ENCODE measurements at regions of chr16 and their contacts with region 1.

Region 1: GRCh38 chr16:70653809-70654771 is 7.7 kb downstream of the IL34 start:
- DNase-seq: peak in 8 of 10 donors; percentile 57 to 95 (median 88)

Region 2: DNA sequence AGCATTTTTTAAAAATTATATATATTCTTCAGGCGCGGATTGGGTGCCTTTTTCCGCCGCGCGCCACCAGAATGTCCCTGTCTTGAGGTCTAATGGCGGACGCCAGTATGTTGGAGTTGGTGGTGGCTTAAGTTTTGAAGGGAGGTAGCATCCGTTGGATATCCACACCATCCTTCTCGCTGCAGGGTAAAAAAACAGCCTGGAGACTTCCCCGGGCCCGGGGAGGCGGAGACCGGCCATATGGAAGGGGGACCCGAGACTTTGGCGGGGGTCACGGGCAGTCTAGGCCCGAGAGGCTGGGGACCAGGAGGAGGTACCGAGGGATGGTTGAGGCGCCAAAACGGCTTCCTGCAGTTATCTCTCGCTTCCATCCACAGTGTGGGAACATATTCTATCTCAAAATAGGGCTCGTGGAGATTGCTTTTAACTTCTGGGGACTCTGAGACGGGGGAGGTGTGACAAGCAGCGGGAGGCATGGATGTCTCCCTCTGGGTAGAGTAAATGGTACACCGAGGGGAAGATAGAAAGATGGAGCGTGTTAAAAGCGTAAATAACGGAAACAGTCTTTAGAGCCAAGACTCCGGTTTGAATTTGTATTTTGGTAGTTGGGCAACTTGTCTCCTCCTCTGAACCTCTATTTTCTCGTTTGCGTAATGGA is 130.2 kb before region 1 on chr16 and contains the start of gene SF3B3:
- intact Hi-C with region 1: loop called (anchors 2 kb)
- DNase-seq: peak; percentile 45 to 93 (median 70)

Region 3: GRCh38 chr16:70594576-70594975 is 59.5 kb before region 1 on chr16:
- intact Hi-C with region 1: no loop called
- DNase-seq: peak in 1 of 10 donors; percentile 8

Measured in posterior cingulate gyrus (tissue), 11 donors.